Psoas muscle (tissue), 8 donors: ENCODE measurements at regions of chr2 and their contacts with region 1.

Region 1: DNA sequence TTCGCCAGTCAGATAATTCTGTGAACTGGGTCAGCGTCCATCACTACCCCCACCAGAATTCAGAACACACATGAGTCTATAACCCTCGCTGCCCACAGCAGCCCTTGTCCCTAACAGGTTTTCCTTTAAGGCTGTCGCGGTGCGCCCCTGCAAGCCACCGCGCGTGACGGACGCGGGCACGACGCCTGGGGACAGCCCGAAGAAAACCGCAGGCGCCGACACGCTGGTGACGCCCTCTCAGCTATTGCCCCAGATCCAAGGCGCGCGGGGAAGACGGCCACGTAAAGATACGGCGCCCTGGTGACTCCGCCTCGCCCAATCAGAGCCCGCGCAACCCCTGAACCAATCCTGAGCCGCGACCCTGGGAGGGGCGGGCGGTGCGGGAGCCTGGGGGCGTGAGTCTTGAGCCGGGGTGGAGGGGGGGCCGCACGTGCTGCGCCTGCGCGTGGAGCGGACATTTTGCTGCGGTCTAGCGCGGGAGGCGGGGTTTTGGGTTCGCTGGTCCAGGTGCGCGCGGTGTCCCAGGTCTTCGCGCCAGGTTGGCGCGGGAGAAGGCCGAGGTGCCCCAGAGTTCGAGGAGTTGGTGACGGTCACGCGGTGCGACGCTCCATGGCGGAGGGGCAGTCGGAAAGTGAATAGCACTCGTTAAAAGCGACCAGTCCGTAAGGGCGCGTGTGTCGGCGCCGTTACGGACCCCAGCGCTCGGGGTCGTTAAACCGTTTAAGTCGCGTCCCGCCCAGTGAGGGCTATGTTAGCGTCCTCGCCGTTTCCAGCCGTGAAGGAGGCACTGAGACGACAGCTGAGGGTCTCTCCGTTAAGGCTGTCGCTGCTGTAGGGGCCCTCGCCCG is 15.9 kb downstream of the NMUR1 start:
- DNase-seq: peak; percentile 99
- ATAC-seq: peak; percentile 97 to 99 (median 99)
- H3K4me3 ChIP-seq: peak overlapping the region; percentile 85
- H3K27ac ChIP-seq: peak overlapping the region; percentile 97
- H3K4me1 ChIP-seq: peaks cover 20% of the 10 kb centered on the region
- H3K27me3 ChIP-seq: no peaks in the 10 kb centered on the region
- CTCF ChIP-seq: no peak

Region 2: DNA sequence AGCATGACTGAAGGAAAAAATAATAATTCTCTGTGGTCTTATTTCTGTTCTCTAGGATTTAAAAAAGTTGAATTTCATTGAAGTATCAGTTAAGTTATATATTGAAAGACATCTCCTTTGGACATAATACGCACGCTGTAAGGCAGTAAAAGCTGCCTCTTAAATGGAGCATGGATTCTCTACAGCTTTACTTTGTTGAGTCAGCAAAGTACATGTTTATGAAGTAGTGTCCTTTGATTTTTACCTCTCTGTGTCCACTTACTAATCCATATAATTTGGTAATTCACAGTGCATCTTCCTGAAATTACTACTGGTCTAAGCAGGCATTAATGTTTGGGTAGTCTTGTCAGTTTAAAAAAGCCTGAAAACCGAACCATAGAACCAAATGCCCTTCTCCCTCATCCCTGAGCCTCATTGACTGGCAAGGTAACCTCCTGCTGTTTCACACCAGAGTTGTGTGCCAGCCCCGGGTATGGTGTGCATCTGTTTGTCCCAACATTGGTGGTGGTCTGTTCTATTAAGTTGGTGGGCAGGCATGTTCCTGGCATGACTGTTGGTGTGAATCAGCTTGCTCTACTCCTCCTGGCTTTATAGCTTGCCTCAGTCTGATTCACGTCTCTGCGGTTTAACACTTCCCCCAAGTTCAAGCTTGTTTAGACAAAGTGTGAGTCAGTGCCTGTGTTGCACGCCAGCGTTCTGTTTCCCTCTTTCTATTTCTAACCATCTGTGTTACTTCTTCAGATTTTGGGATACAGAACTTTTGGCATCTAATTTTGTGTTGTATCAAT is 720.6 kb before region 1 on chr2:
- intact Hi-C with region 1: no loop called
- DNase-seq: peak; percentile 64 to 78
- ATAC-seq: peak; percentile 71 to 86 (median 83)
- H3K4me3 ChIP-seq: no peak overlapping the region
- H3K27ac ChIP-seq: peak overlapping the region; percentile 80
- H3K4me1 ChIP-seq: peaks cover 72% of the 10 kb centered on the region
- H3K27me3 ChIP-seq: no peaks in the 10 kb centered on the region
- CTCF ChIP-seq: no peak

Region 3: GRCh38 chr2:231464576-231465404 is 49.5 kb before region 1 on chr2:
- intact Hi-C with region 1: loop called in 1 of 2 experiments (anchors 5 kb)
- DNase-seq: peak; percentile 99
- ATAC-seq: peak; percentile 62 to 95 (median 94)
- H3K4me3 ChIP-seq: peak overlapping the region; percentile 80
- H3K27ac ChIP-seq: peak overlapping the region; percentile 91
- H3K4me1 ChIP-seq: peaks cover 31% of the 10 kb centered on the region
- H3K27me3 ChIP-seq: no peaks in the 10 kb centered on the region
- CTCF ChIP-seq: no peak

Region 4: GRCh38 chr2:231557571-231558237 is 43.4 kb after region 1 on chr2:
- intact Hi-C with region 1: loop called (anchors 5 kb)
- DNase-seq: peak; percentile 36 to 86
- ATAC-seq: peak; percentile 92 to 98 (median 96)
- H3K4me3 ChIP-seq: no peak overlapping the region
- H3K27ac ChIP-seq: peak overlapping the region; percentile 36
- H3K4me1 ChIP-seq: peaks cover 3% of the 10 kb centered on the region
- H3K27me3 ChIP-seq: no peaks in the 10 kb centered on the region
- CTCF ChIP-seq: peak; percentile 74

Region 5: DNA sequence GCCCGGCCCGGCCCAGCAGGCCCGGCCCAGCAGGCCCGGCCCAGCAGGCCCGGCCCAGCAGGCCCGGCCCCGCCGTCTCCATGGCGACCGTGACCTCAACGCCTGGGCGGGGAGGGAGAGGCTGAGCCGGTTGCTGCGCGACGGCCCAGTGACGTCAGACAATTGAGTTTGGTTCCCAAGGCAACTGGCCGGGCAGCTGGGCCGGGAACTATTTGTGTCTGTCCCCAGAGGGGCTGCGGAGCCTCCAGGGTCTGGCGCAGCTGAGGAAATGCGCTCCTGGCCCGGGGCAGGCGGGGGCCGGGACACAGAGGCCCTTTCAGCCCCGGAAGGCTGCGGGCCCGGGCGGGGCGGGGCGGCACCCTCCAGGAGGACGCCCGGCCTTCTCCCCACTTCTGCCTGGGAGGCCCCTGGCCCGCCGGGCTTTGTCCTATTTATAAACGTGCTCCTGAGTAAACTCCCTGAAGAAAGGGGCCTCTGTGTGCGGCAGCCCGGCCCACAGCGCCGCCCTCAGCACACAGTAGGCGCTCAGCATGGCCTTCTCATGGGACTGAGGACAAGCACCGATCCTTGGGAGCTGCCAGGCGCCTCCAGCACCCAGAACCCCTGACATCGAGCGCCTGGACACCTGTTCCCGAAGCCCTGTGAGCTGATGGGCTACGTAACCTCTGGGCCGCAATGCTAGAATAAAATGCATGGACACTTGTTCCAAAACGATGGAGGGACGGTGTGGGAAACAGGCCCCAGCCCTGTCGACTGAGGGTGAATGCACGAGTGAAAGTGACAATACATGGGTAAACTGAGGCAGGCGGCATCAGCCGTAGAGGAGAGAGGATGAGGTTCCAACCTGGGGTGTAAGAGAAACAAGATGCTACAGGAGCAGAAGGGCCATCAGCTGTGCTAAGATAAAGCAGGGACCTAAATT is 90.6 kb after region 1 on chr2:
- intact Hi-C with region 1: loop called (anchors 5 kb)
- DNase-seq: peak; percentile 100
- ATAC-seq: peak; percentile 88 to 93 (median 88)
- H3K4me3 ChIP-seq: peak overlapping the region; percentile 78
- H3K27ac ChIP-seq: peak overlapping the region; percentile 99
- H3K4me1 ChIP-seq: peaks cover 25% of the 10 kb centered on the region
- H3K27me3 ChIP-seq: no peaks in the 10 kb centered on the region
- CTCF ChIP-seq: no peak